ENCODE measurements at regions of chr22 and their contacts with region 1.

Region 1: GRCh38 chr22:23178512-23179254 is 1.6 kb upstream of the BCR start:
- DNase-seq: peak; percentile 69
- H3K4me3 ChIP-seq: no peak overlapping the region
- H3K27ac ChIP-seq: no peak overlapping the region
- H3K4me1 ChIP-seq: peaks cover 19% of the 10 kb centered on the region
- H3K27me3 ChIP-seq: no peaks in the 10 kb centered on the region

Region 2: GRCh38 chr22:23270212-23270733 is 91.6 kb after region 1 on chr22:
- in situ Hi-C with region 1: loop called (anchors 5 kb)
- DNase-seq: no peak
- H3K4me3 ChIP-seq: no peak overlapping the region
- H3K27ac ChIP-seq: no peak overlapping the region
- H3K4me1 ChIP-seq: no peaks in the 10 kb centered on the region
- H3K27me3 ChIP-seq: no peaks in the 10 kb centered on the region

Region 3: GRCh38 chr22:23539135-23539838 is 360.6 kb after region 1 on chr22:
- in situ Hi-C with region 1: loop called (anchors 25 kb)
- DNase-seq: peak; percentile 84
- H3K4me3 ChIP-seq: peak overlapping the region; percentile 53
- H3K27ac ChIP-seq: no peak overlapping the region
- H3K4me1 ChIP-seq: no peaks in the 10 kb centered on the region
- H3K27me3 ChIP-seq: no peaks in the 10 kb centered on the region

Measured in GM23248 (cell line).